ENCODE measurements at regions of chr5 and their contacts with region 1.

Region 1: GRCh38 chr5:143940513-143940912 is 128.6 kb downstream of the HMHB1 start:
- DNase-seq: no peak
- ATAC-seq: no peak
- H3K4me3 Mint-ChIP-seq: no peak overlapping the region
- H3K27ac Mint-ChIP-seq: no peak overlapping the region
- H3K4me1 Mint-ChIP-seq: no peaks in the 10 kb centered on the region
- H3K27me3 Mint-ChIP-seq: peaks cover 1% of the 10 kb centered on the region
- CTCF ChIP-seq: no peak

Region 2: DNA sequence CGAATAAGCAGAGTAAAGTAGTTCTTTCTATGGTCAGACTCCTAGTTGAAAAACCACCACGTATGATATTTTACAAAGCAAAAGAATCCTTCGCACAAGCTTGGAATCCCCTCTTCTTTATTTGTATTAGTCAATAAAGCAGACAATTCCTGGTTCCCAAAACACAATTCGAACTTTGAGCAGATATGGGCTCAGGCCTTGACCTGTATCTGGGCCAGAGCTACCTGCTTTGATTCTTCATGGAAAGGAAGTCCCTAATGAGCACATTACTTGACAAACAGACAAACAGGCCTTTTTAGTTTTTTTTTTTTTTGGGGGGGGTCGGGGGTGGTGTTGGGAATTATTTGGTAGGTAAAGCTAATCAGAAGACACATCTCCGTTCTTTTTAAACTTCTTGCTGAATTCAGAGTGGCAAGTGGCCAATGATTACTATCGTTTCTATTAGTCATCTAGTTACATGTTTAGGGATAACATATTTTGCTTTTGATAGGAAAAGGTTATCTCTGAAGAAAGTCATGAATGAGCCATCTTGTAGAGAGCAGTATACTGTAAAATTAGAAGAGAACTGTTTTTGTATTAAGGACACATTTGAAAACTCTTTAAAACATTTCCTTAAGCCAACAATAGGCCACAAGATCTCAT is 245.1 kb before region 1 on chr5:
- CTCF ChIA-PET with region 1: no interaction called
- POLR2A ChIA-PET with region 1: interaction called, 11 read pairs
- intact Hi-C with region 1: no loop called
- DNase-seq: no peak
- ATAC-seq: no peak
- H3K4me3 Mint-ChIP-seq: no peak overlapping the region
- H3K27ac Mint-ChIP-seq: no peak overlapping the region
- H3K4me1 Mint-ChIP-seq: no peaks in the 10 kb centered on the region
- H3K27me3 Mint-ChIP-seq: no peaks in the 10 kb centered on the region
- CTCF ChIP-seq: no peak